ENCODE measurements at regions of chr14 and their contacts with region 1.

Region 1: DNA sequence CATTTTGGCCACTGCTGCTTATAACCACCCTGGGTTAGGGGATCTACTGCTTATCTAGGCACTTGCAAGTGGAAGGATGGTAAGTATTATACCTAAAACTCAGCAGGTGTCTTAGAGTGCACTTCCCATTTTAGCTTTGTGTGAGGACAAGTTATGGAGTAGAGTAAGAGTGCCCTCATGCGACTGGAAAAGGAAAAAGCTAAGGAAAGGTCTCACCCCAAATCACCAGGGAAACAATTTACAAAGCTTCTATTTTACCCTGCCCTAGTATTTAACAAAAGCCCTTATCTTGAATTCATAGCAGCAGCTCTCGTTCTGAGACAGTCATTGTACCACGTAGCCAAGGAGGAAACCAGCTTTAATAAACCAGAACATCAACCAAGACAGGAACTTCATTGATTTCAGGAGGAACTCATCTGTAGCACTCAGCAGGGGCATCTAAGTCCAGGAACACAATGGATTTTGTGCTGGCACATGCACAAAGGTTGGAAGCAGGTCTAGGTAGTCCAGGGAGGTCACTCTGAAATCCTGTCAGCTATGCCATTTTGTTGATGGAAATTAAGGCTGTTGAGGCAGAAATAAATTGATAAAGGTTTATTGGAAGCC is 2.9 kb downstream of the RDH12 start:
- DNase-seq: peak; percentile 79
- ATAC-seq: peak; percentile 88
- H3K4me3 ChIP-seq: no peak overlapping the region
- H3K27ac ChIP-seq: no peak overlapping the region
- H3K4me1 ChIP-seq: peaks cover 8% of the 10 kb centered on the region; the same call in 1 of the 2 replicates
- H3K27me3 ChIP-seq: no peaks in the 10 kb centered on the region
- CTCF ChIP-seq: peak; percentile 91

Region 2: DNA sequence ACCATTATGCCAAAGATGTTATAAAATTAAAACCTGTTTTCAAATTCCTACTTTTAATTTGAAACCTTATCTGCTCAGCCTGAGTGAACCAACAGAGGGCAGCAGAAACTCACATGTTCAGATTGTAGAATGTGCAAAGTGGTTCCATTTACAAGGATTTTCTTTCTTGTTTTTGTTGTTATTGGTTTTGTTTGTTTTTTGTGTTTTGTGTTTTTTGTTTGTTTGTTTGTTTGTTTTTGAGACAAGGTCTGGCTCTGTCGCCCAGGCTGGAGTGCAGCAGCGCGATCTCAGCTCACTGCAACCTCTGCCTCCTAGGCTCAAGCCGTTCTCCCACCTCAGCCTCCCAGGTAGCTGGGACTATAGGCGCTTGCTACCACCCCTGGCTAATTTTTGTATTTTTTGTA is 538.1 kb before region 1 on chr14:
- CTCF ChIA-PET with region 1: no interaction called
- POLR2A ChIA-PET with region 1: no interaction called
- intact Hi-C with region 1: loop called (anchors 5 kb)
- DNase-seq: peak; percentile 77
- ATAC-seq: peak; percentile 52
- H3K4me3 ChIP-seq: no peak overlapping the region
- H3K27ac ChIP-seq: no peak overlapping the region
- H3K4me1 ChIP-seq: peaks cover 13% of the 10 kb centered on the region
- H3K27me3 ChIP-seq: no peaks in the 10 kb centered on the region
- CTCF ChIP-seq: peak; percentile 96

Region 3: GRCh38 chr14:67526676-67527459 is 177.7 kb before region 1 on chr14:
- CTCF ChIA-PET with region 1: interaction called, 25 read pairs
- POLR2A ChIA-PET with region 1: interaction called, 5 read pairs
- intact Hi-C with region 1: loop called (anchors 1 kb)
- DNase-seq: peak; percentile 63
- ATAC-seq: peak; percentile 87
- H3K4me3 ChIP-seq: no peak overlapping the region
- H3K27ac ChIP-seq: no peak overlapping the region
- H3K4me1 ChIP-seq: no peaks in the 10 kb centered on the region; the same call in 1 of the 2 replicates
- H3K27me3 ChIP-seq: peaks cover 11% of the 10 kb centered on the region; the same call in 1 of the 2 replicates
- CTCF ChIP-seq: peak; percentile 99

Region 4: DNA sequence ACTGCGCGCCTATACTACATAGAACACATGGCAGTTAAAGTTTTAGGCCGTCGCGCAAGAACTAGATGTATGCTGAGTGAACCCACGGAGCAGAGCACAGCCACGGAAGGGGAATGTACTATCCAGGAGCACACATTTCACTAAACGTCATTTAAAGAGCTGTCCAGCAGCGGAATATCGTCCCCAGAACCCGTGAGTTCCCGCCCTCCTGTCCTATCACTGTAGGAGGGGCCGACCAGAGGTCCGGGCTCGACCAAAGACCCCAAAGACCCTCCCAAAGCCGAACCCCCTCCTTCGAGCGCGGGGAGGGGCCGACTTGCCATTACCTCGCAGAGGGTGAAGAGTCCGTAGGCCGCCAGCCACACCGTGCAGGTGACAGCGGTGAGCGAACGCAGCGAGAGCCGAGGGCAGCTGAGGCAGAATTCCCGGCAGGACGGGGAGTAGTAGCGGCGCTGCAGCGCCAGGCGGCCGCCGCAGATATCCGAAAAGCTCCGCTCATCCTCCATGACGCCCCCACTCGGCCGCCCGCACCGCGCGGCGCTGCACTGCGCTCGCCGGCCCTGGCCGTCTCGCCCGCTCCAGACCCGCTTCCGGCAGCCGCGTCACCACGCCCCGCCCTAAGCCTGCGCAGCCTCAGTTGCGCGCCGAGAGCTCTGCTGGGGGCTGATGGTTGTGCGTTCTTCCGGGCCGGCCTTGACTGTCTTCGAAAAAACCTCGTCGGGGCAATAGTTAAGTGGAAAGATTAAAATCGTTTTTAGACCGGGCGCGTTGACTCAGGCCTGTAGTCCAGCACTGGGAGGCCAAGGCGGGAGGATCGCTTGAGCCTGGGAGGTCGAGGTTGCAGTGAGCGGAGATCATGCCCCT is 104.7 kb before region 1 on chr14 and contains the start of gene PIGH:
- CTCF ChIA-PET with region 1: interaction called, 12 read pairs
- POLR2A ChIA-PET with region 1: interaction called, 3 read pairs
- intact Hi-C with region 1: no loop called
- DNase-seq: peak; percentile 88
- ATAC-seq: peak; percentile 97
- H3K4me3 ChIP-seq: peak within 1 kb of the TSS; percentile 91
- H3K27ac ChIP-seq: peak within 1 kb of the TSS; percentile 39
- H3K4me1 ChIP-seq: peaks cover 14% of the 10 kb centered on the region; the same call in 1 of the 2 replicates
- H3K27me3 ChIP-seq: no peaks in the 10 kb centered on the region
- CTCF ChIP-seq: peak; percentile 63
- total RNA-seq, gene PIGH: 63.8 and 66.4 TPM in 2 replicates

Region 5: DNA sequence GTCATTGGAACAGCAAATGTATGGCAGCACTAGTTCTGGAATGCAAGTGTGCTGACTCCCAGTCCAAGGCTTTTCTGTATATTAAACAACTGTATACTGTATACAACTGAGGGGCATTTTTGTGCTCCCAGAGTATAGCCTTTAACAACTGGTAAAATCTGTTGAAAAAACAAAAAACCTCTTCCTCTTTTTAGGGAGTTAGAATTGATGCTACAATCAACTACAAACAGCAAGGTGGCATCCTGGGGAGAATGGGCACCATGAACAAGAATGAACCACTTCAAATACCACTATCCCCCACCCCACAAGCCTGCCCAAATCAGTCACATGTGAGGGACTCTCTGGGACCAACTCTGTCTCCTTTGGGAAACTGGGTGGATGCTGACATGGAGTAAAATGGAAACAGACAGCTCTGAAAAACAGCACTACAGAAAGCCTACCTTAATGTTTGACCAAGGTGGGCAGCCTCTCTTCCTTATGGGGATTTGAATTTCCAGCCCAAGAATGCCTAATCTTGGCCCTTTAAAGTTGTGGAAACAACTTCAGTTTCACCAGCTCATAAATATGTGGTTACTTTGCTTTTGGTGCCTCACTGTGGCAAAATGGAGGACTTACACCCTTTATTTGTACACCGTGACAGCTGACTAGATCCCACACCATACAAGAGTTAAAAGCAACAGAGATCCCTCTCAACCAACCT is 37.7 kb before region 1 on chr14:
- CTCF ChIA-PET with region 1: interaction called, 28 read pairs
- POLR2A ChIA-PET with region 1: interaction called, 3 read pairs
- intact Hi-C with region 1: loop called (anchors 1 kb)
- DNase-seq: peak; percentile 69
- ATAC-seq: peak; percentile 90
- H3K4me3 ChIP-seq: no peak overlapping the region
- H3K27ac ChIP-seq: no peak overlapping the region
- H3K4me1 ChIP-seq: no peaks in the 10 kb centered on the region
- H3K27me3 ChIP-seq: no peaks in the 10 kb centered on the region
- CTCF ChIP-seq: peak; percentile 86

Region 6: GRCh38 chr14:67999693-68000384 is 295.3 kb after region 1 on chr14:
- CTCF ChIA-PET with region 1: no interaction called
- POLR2A ChIA-PET with region 1: no interaction called
- intact Hi-C with region 1: no loop called
- DNase-seq: peak; percentile 92
- ATAC-seq: peak; percentile 99
- H3K4me3 ChIP-seq: peak overlapping the region; percentile 60
- H3K27ac ChIP-seq: peak overlapping the region; percentile 64
- H3K4me1 ChIP-seq: peaks cover 20% of the 10 kb centered on the region
- H3K27me3 ChIP-seq: no peaks in the 10 kb centered on the region
- CTCF ChIP-seq: no peak

Measured in PC-3 (cell line).